ENCODE measurements at regions of chr9 and their contacts with region 1.

Region 1: GRCh38 chr9:87662808-87663528 is 63.0 kb upstream of the CTSL start:
- DNase-seq: peak; percentile 81
- H3K4me3 Mint-ChIP-seq: no peak overlapping the region
- H3K27ac Mint-ChIP-seq: no peak overlapping the region
- H3K4me1 Mint-ChIP-seq: no peaks in the 10 kb centered on the region
- H3K27me3 Mint-ChIP-seq: peaks cover 2% of the 10 kb centered on the region

Region 2: GRCh38 chr9:86413966-86414880 is 1248.7 kb before region 1 on chr9:
- CTCF ChIA-PET with region 1: no interaction called
- intact Hi-C with region 1: loop called (anchors 10 kb)
- DNase-seq: no peak
- H3K4me3 Mint-ChIP-seq: no peak overlapping the region
- H3K27ac Mint-ChIP-seq: no peak overlapping the region
- H3K4me1 Mint-ChIP-seq: no peaks in the 10 kb centered on the region
- H3K27me3 Mint-ChIP-seq: peaks cover 4% of the 10 kb centered on the region

Region 3: GRCh38 chr9:86486891-86487837 is 1175.8 kb before region 1 on chr9:
- CTCF ChIA-PET with region 1: no interaction called
- intact Hi-C with region 1: loop called (anchors 10 kb)
- DNase-seq: no peak
- H3K4me3 Mint-ChIP-seq: no peak overlapping the region
- H3K27ac Mint-ChIP-seq: no peak overlapping the region
- H3K4me1 Mint-ChIP-seq: peaks cover 2% of the 10 kb centered on the region
- H3K27me3 Mint-ChIP-seq: no peaks in the 10 kb centered on the region

Region 4: DNA sequence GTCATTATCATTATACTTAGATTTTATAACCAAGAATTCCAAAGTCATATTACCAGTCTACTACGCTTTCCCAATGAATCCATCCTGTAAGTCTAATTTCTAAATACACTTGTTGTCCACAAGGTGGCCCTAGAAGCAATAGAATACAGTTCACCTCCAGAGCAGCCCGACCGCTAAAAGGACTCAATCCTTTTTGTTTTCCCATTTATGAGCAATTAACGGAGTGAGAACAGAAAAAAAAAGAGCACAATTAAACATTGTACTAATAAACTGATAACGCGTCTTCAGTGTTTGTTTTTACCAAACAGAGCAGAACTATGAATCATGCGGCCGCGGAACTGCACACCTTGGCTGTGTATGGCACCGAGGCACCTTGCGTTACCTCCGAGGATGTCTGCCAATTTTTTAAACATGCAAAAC is 326.0 kb before region 1 on chr9:
- CTCF ChIA-PET with region 1: interaction called, 35 read pairs
- intact Hi-C with region 1: loop called (anchors 1 kb)
- DNase-seq: peak; percentile 28
- H3K4me3 Mint-ChIP-seq: peak overlapping the region; percentile 62
- H3K27ac Mint-ChIP-seq: no peak overlapping the region
- H3K4me1 Mint-ChIP-seq: peaks cover 10% of the 10 kb centered on the region
- H3K27me3 Mint-ChIP-seq: peaks cover 43% of the 10 kb centered on the region

Region 5: GRCh38 chr9:87547667-87548066 is 115.3 kb before region 1 on chr9:
- CTCF ChIA-PET with region 1: no interaction called
- intact Hi-C with region 1: no loop called
- DNase-seq: no peak
- H3K4me3 Mint-ChIP-seq: no peak overlapping the region
- H3K27ac Mint-ChIP-seq: no peak overlapping the region
- H3K4me1 Mint-ChIP-seq: no peaks in the 10 kb centered on the region
- H3K27me3 Mint-ChIP-seq: peaks cover 6% of the 10 kb centered on the region

Measured in activated naive CD4-positive, alpha-beta T cell treated with anti-CD3 and anti-CD28 coated beads for 36 hours (primary cell).